Cardiac septum (tissue), 1 donor: ENCODE measurements at regions of chr11 and their contacts with region 1.

Region 1: DNA sequence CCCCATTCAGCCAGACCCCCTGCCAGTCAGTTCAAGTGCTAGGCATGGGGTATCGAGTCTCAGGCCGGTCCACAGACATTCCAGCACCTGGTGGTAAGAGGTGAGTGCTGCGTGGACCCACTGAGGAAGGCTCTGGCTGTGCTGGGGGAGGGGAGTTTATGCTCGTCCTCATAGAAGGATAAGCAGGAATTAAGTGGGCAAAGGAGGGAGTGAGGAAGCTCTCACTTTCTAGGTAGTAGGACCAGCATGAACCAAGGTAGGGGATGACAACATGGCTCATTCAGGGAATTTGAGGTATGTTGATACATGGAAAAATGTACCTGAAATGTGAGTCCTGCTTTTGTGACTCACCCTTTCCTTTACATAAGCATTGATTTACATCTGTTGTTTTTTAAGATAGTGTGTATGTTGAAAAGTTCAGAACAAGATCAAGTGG is 116.7 kb downstream of the PTPRJ start:
- DNase-seq: no peak

Region 2: GRCh38 chr11:47980245-47981049 is 116.6 kb before region 1 on chr11 and contains the start of gene PTPRJ:
- intact Hi-C with region 1: loop called (anchors 5 kb)
- DNase-seq: peak; percentile 90
- total RNA-seq, gene PTPRJ: 11.0 TPM

Region 3: DNA sequence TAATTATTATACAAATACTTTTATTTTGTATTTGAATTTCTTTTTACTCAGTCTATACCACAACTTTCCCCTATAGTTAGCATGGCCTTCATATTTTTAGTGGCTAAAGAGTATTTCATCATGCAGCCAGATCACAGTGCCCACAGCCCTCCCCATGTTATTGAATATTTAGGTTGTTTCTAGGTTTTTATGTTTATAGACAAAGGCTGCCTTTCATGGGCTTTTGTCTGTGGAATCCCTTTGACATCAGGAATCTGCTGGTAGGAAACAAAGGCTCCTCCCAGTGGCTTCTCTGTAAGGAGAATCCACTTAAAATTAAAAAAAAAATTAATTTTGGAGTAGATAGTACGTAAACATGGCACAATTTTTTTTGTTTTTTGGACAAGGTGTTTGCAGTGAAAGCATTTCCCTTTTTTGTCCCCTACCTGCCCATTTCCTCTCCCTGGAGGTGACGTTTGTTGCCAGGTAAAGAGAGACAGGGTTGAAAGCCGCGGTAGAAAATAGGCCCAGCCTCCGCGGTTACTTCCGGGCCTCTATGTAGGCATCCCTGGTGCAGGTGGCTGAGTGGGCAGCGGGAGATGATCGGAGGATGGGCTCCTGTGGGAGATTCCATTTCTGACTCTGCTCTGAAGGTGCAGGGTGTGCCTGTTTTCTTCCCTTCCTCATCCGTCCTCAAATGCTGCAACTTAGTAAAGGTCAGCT is 37.3 kb after region 1 on chr11:
- intact Hi-C with region 1: no loop called
- DNase-seq: no peak